T-cell (primary cell): ENCODE measurements at regions of chr15 and their contacts with region 1.

Region 1: GRCh38 chr15:65184868-65185738 is at the start of gene CLPX:
- DNase-seq: peak; percentile 76 to 97 (median 93)
- ATAC-seq: peak; percentile 93 to 97 (median 95)
- H3K4me3 ChIP-seq: peak within 1 kb of the TSS; percentile 90 to 98
- H3K4me3 Mint-ChIP-seq: peak within 1 kb of the TSS; percentile 90 to 95 (median 93)
- H3K27ac ChIP-seq: peak within 1 kb of the TSS; percentile 91
- H3K27ac Mint-ChIP-seq: peak within 1 kb of the TSS; percentile 93 to 96
- H3K4me1 ChIP-seq: peaks cover 15 to 17% of the 10 kb centered on the region in 2 experiments
- H3K4me1 Mint-ChIP-seq: peaks cover 29 to 40% (median 34%) of the 10 kb centered on the region in 3 donors
- H3K27me3 ChIP-seq: no peaks in the 10 kb centered on the region
- H3K27me3 Mint-ChIP-seq: no peaks in the 10 kb centered on the region
- total RNA-seq, gene CLPX: 32.6 to 54.4 (median 51.1) TPM

Region 2: DNA sequence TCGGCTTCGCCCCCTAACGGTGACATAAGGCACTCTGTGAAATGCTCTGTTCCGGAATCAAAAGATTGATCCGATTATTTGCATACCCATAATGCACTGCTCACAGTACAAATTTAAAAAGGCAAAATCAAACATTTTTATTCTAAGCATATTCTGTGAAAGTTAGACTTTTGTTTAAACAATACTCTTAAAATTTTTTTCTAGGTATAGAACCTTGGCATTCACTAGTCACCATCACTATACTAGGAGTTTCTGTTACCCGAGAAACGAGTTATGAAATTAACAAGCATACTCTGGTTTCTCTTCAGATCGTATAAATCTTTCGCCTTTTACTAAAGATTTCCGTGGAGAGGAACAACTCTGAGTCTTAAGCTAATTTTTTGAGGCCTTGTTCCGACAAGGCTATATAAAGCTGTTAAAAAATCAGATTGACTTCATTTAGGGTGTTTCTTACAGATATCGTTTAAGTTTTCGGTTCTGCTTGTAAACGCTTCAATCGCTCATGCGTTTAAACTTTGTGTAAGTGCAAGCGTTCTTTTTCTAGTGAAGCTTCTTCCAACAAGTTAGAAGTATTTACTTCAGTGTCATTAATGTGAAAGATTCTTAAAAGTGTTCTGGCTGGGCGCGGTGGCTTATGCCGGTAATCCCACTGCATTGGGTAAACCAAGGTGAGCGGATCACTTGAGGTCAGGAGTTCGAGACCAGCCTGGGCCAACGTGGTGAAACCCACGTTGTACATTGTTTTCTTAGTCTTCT is 119.5 kb after region 1 on chr15 and contains the start of gene RNU5B-1:
- CTCF ChIA-PET with region 1: interaction called in 1 of 2 experiments, 5 read pairs
- POLR2A ChIA-PET with region 1: interaction called, 3 to 16 read pairs
- DNase-seq: peak; percentile 37 to 92 (median 67)
- ATAC-seq: peak; percentile 80 to 87 (median 81)
- H3K4me3 ChIP-seq: peak within 1 kb of the TSS; percentile 60 to 67
- H3K4me3 Mint-ChIP-seq: peak within 1 kb of the TSS; percentile 92 to 94 (median 93)
- H3K27ac ChIP-seq: peak within 1 kb of the TSS; percentile 99
- H3K27ac Mint-ChIP-seq: peak within 1 kb of the TSS; percentile 98 to 99
- H3K4me1 ChIP-seq: peaks cover 13 to 28% of the 10 kb centered on the region in 2 experiments
- H3K4me1 Mint-ChIP-seq: peaks cover 25 to 32% (median 32%) of the 10 kb centered on the region in 3 donors
- H3K27me3 ChIP-seq: no peaks in the 10 kb centered on the region
- H3K27me3 Mint-ChIP-seq: no peaks in the 10 kb centered on the region
- total RNA-seq, gene RNU5B-1: 27.0 to 34.4 (median 32.6) TPM in 3 of 5 donors, not detected in the others